ENCODE measurements at regions of chr20 and their contacts with region 1.

Region 1: DNA sequence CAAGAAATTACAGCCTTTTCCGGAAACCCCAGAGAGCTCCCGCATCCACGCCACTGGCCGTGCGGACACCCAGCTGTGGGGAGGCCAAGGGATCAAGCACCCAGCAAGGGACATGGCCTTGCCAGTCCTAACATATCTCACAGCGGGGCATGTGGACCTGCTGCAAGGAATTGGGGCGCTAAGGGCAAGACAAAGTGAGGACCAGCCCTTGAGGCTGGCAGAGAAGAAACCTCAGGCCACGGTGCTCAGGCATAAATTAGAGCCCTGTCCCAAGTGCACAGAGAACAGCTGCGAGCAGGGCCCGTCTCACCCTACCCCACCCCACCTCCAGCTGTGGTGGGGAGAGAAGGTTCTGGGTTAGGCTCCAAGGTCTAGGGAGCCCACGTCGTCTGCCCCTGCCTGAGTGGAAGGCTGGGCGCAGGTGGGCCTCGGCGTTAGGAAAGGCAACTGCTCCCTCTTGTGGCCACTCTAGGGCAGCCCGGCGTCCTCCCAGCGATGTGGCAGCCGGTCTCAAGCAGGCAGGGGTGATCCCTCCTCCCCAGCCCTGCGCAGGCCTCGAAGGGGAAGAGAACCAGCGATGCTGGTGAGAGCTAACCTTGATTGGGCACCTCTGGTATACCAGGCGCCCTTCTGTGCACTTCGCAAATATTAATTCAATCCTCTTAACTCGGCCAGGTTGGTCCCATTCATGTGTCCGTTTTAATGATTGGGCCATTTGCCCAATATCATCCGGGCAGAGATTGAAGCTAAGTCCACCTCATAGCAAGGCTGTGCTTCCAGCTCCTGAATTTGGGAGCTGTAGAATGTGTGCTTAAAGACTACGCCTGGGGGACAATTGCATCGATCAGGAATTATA is 235.8 kb downstream of the NFATC2 start:
- DNase-seq: no peak

Region 2: GRCh38 chr20:50790651-50791277 is 516.0 kb before region 1 on chr20:
- intact Hi-C with region 1: loop called (anchors 5 kb)
- DNase-seq: peak; percentile 93

Region 3: GRCh38 chr20:50987592-50988210 is 319.0 kb before region 1 on chr20:
- intact Hi-C with region 1: loop called (anchors 2 kb)
- DNase-seq: no peak

Region 4: DNA sequence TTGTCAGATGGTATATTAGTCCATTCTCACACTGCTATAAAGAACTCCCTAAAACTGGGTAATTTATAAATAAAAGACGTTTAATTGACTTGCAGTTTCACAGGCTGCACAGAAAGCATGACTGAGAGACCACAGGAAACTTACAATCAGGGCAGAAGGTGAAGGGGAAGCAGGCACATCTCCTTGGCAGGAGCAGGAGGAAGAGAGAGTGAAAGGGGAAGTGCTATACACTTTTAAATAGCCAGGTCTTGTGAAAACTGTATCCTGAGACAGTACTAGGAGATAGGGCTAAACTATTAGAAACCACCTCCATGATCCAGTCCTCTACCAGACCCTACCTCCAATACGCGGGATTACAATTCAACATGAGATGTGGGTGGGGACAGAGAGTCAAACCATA is 89.9 kb before region 1 on chr20:
- intact Hi-C with region 1: loop called (anchors 5 kb)
- DNase-seq: no peak

Region 5: GRCh38 chr20:51335329-51335841 is 28.7 kb after region 1 on chr20:
- intact Hi-C with region 1: no loop called
- DNase-seq: no peak

Region 6: DNA sequence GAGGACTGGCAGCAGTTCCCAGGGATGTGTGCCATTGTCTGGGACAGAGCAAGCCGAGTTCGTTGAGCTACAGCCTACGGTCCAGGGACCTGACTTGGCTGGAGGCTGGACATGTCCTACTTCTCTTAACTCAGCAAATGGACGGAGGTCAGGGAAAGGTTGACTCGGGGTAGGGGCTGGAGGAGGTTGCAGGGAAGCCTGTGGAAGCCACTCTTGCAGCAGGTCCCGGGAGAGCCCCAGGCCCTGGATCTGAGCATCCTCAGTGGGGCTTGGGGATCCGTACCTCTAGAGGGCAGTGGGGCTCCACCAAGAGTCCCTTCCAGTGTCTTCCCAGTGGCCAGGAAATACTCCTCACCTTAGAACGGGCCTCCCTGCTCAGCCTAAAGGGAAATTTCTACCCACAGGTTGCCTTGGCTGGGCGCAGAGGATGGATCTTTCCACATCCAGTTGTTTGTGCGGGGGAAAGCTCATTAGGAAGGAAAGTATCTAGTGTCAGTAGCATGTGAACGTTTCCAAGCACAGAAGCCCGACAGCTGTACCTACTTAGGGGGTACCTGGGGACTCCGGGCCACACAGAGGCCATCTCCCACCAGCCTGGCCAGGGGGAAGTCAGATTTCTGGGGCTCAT is 65.6 kb after region 1 on chr20:
- intact Hi-C with region 1: no loop called
- DNase-seq: no peak

Measured in cardiac septum (tissue), 1 donor.